Endothelial cell of umbilical vein (primary cell): ENCODE measurements at regions of chr3 and their contacts with region 1.

Region 1: GRCh38 chr3:50321336-50322114 is 1.0 kb downstream of the HYAL2 start:
- DNase-seq: peak; percentile 91
- H3K4me3 ChIP-seq: peak overlapping the region; percentile 65 to 89 (median 89)
- H3K27ac ChIP-seq: peak overlapping the region; percentile 99
- H3K4me1 ChIP-seq: peaks cover 63% of the 10 kb centered on the region
- H3K27me3 ChIP-seq: no peaks in the 10 kb centered on the region
- CTCF ChIP-seq: peak; percentile 41 to 82
- POLR2A ChIP-seq: no peak

Region 2: GRCh38 chr3:50227390-50228183 is 93.9 kb before region 1 on chr3:
- CTCF ChIA-PET with region 1: interaction called, 3 read pairs
- POLR2A ChIA-PET with region 1: no interaction called
- dilution Hi-C with region 1: no loop called
- intact Hi-C with region 1: loop called (anchors 2 kb)
- DNase-seq: peak; percentile 62
- H3K4me3 ChIP-seq: peak overlapping the region; percentile 19 to 50 (median 33)
- H3K27ac ChIP-seq: no peak overlapping the region
- H3K4me1 ChIP-seq: peaks cover 13% of the 10 kb centered on the region
- H3K27me3 ChIP-seq: no peaks in the 10 kb centered on the region
- CTCF ChIP-seq: peak; percentile 66 to 76
- POLR2A ChIP-seq: peak; percentile 57

Region 3: DNA sequence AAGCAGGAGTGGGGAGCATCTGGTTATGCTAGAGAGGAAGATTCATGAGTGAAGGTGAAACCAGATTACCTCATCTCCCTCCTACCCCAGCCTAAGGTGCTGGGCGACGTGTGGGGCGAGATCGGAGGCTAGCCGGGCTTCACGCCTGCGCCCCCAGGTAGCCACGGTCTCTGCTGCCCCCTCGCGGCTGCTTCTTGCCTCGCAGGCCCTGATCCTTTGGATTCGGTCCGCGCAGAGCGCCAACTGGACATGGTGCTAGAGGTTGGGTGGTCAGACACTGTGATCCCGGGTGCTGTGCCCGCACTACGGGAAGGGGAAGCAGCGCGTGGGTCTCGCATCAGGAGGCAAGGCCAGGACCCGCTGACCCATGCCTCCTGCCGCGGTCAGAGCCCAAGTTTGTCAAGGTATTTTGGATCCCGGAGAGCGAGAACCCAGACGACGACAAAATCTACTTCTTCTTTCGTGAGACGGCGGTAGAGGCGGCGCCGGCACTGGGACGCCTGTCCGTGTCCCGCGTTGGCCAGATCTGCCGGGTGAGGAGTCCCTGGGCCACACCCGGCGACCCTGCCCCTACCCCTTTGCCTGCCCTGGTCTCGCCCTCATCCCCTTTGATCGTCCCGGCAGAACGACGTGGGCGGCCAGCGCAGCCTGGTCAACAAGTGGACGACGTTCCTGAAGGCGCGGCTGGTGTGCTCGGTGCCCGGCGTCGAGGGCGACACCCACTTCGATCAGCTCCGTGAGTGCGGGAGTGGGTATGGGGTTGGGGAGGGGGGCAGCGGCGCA is 48.4 kb before region 1 on chr3:
- CTCF ChIA-PET with region 1: interaction called, 47 read pairs
- POLR2A ChIA-PET with region 1: no interaction called
- dilution Hi-C with region 1: no loop called
- intact Hi-C with region 1: loop called (anchors 1 kb)
- DNase-seq: peak; percentile 84
- H3K4me3 ChIP-seq: peak overlapping the region in 2 of 3 experiments; percentile 13 to 14
- H3K27ac ChIP-seq: no peak overlapping the region
- H3K4me1 ChIP-seq: peaks cover 2% of the 10 kb centered on the region
- H3K27me3 ChIP-seq: peaks cover 18 to 24% of the 10 kb centered on the region in 2 experiments
- CTCF ChIP-seq: peak; percentile 93 to 98
- POLR2A ChIP-seq: no peak

Region 4: GRCh38 chr3:50298836-50299637 is 22.5 kb before region 1 on chr3 and contains the starts of genes HYAL3 and NAA80:
- CTCF ChIA-PET with region 1: interaction called, 48 read pairs
- POLR2A ChIA-PET with region 1: interaction called, 5 read pairs
- dilution Hi-C with region 1: no loop called
- intact Hi-C with region 1: loop called (anchors 1 kb)
- DNase-seq: peak; percentile 100
- H3K4me3 ChIP-seq: peak within 1 kb of the TSS; percentile 51 to 69 (median 64)
- H3K27ac ChIP-seq: peak within 1 kb of the TSS; percentile 70
- H3K4me1 ChIP-seq: peaks cover 25% of the 10 kb centered on the region
- H3K27me3 ChIP-seq: no peaks in the 10 kb centered on the region
- CTCF ChIP-seq: peak in 1 of 2 donors; percentile 39
- POLR2A ChIP-seq: peak; percentile 97
- total RNA-seq, gene HYAL3: 3.8 and 4.8 TPM in 2 replicates
- total RNA-seq, gene NAA80: 9.0 and 9.7 TPM in 2 replicates

Region 5: GRCh38 chr3:50405249-50405648 is 83.7 kb after region 1 on chr3:
- CTCF ChIA-PET with region 1: no interaction called
- POLR2A ChIA-PET with region 1: no interaction called
- dilution Hi-C with region 1: no loop called
- intact Hi-C with region 1: no loop called
- DNase-seq: no peak
- H3K4me3 ChIP-seq: no peak overlapping the region
- H3K27ac ChIP-seq: no peak overlapping the region
- H3K4me1 ChIP-seq: no peaks in the 10 kb centered on the region
- H3K27me3 ChIP-seq: no peaks in the 10 kb centered on the region
- CTCF ChIP-seq: no peak
- POLR2A ChIP-seq: no peak